OCI-LY7 (cell line): ENCODE measurements at regions of chr3 and their contacts with region 1.

Region 1: DNA sequence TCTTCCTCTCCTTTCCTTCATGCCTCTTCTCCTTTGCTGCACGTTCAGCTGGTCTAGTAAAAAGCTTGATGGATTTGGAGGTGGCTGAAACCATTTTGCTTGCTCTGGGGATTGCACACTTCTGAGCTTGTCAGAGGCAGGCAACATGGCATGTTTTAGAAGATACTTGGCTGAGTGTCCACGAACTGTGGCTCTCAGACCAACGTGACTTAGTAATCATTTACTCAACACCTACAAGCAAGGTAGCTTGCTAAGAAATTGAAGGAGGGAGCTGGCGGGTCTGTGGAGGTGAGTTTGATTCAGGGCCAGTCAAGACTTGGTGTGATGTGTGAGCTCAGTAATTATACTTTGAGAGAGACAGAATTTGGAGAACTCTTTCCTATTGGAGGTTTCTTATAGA is 196.0 kb downstream of the LPP start:
- DNase-seq: no peak
- H3K4me3 ChIP-seq: no peak overlapping the region
- H3K27ac ChIP-seq: no peak overlapping the region
- H3K4me1 ChIP-seq: peaks cover 17% of the 10 kb centered on the region
- CTCF ChIP-seq: no peak; the same call in 1 of the 2 replicates

Region 2: GRCh38 chr3:188037216-188037718 is 312.7 kb before region 1 on chr3:
- CTCF ChIA-PET with region 1: no interaction called
- POLR2A ChIA-PET with region 1: interaction called, 11 read pairs
- intact Hi-C with region 1: no loop called
- DNase-seq: no peak
- H3K4me3 ChIP-seq: no peak overlapping the region
- H3K27ac ChIP-seq: no peak overlapping the region
- H3K4me1 ChIP-seq: peaks cover 42% of the 10 kb centered on the region
- CTCF ChIP-seq: 0 out of 2 replicates have a peak, but pooled peaks have one; percentile 27

Region 3: DNA sequence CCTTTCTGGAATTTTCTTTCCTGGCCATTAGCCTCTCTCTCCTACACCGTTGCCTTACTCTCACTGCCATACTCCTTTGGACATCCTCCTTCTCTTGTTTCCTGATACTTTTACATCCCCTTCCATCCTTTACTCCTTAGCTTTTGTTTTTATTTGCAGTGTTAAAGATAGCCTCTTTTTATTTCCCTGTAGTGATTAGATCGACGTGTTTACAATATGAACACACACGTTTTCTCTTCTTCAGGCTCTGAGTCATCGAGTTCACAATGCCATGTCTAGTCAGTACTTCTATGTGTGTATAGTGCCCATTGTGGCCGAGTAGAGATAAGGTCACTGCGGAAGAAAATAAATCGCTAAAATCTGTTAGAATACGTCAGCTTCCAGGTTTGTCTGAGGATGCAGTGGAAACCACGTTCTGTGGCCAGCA is 12.5 kb after region 1 on chr3:
- CTCF ChIA-PET with region 1: no interaction called
- POLR2A ChIA-PET with region 1: interaction called, 11 read pairs
- intact Hi-C with region 1: no loop called
- DNase-seq: no peak
- H3K4me3 ChIP-seq: no peak overlapping the region
- H3K27ac ChIP-seq: no peak overlapping the region
- H3K4me1 ChIP-seq: peaks cover 27% of the 10 kb centered on the region
- CTCF ChIP-seq: no peak

Region 4: GRCh38 chr3:188712248-188712924 is 362.5 kb after region 1 on chr3:
- CTCF ChIA-PET with region 1: no interaction called
- POLR2A ChIA-PET with region 1: no interaction called
- intact Hi-C with region 1: no loop called
- DNase-seq: no peak
- H3K4me3 ChIP-seq: no peak overlapping the region
- H3K27ac ChIP-seq: no peak overlapping the region
- H3K4me1 ChIP-seq: no peaks in the 10 kb centered on the region
- CTCF ChIP-seq: no peak